Endothelial cell of umbilical vein (primary cell): ENCODE measurements at regions of chr18 and their contacts with region 1.

Region 1: GRCh38 chr18:45910405-45911023 is 56.6 kb downstream of the EPG5 start:
- DNase-seq: peak; percentile 61
- H3K4me3 ChIP-seq: no peak overlapping the region
- H3K27ac ChIP-seq: no peak overlapping the region
- H3K4me1 ChIP-seq: no peaks in the 10 kb centered on the region
- H3K27me3 ChIP-seq: no peaks in the 10 kb centered on the region
- CTCF ChIP-seq: peak; percentile 77 to 87
- POLR2A ChIP-seq: no peak

Region 2: GRCh38 chr18:45664824-45665763 is 245.4 kb before region 1 on chr18:
- CTCF ChIA-PET with region 1: interaction called, 25 read pairs
- POLR2A ChIA-PET with region 1: no interaction called
- dilution Hi-C with region 1: no loop called
- intact Hi-C with region 1: loop called (anchors 1 kb)
- DNase-seq: peak; percentile 65
- H3K4me3 ChIP-seq: no peak overlapping the region
- H3K27ac ChIP-seq: no peak overlapping the region
- H3K4me1 ChIP-seq: peaks cover 5% of the 10 kb centered on the region
- H3K27me3 ChIP-seq: no peaks in the 10 kb centered on the region
- CTCF ChIP-seq: peak; percentile 75 to 78
- POLR2A ChIP-seq: no peak